ENCODE measurements at regions of chr1 and their contacts with region 1.

Region 1: GRCh38 chr1:207963427-207964194 is 52.7 kb upstream of the CD34 start:
- DNase-seq: peak; percentile 97
- H3K4me3 ChIP-seq: peak overlapping the region; percentile 59 to 71 (median 68)
- H3K27ac ChIP-seq: peak overlapping the region; percentile 90 to 93 (median 92)
- H3K4me1 ChIP-seq: peaks cover 44 to 59% (median 51%) of the 10 kb centered on the region in 4 donors
- H3K27me3 ChIP-seq: no peaks in the 10 kb centered on the region
- CTCF ChIP-seq: peak in 2 of 3 experiments; percentile 100
- EP300 ChIP-seq: peak; percentile 19
- POLR2A ChIP-seq: peak; percentile 81

Region 2: DNA sequence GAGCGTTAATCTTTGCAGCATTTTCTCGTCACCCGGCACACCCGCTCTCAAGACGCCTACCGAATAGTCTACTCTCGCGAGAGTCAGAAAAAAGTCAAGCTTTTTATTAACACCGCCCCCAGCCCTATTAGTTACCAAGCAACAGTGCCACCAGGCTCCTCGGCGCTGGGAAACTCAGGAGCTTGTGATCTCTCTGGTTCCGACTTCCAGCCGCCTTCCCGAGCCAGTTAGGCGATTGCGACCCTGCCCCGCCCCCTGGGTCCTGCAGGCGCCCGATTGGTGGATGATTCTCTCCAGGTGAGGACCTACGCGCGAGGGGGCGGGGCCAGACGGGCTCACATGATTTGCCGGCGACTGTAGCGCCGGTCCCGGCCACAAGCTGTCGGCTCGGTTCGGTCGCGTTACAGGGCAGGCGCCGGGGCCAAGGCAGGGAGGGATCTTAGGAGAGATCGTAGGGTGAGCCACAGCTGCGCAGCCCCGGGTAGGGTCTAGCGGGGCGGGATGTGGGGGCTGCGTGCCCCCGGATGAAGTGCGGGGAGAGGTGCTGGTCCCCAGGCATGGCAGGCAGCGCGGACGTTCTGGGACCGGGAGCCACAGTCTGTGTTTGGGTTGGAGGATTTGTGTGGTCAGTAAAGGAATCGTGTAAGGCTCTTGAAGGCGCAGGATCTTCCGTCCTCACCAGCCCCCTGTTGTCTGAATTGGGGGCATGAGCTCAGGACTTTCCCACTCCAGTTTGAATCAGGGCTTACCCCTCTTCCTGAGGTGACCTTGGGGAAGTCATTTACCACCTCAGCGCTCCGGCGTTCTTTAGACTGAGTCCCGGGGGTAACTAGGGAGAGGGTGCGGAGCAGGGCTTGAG is 910.5 kb before region 1 on chr1 and contains the start of gene PFKFB2:
- intact Hi-C with region 1: loop called (anchors 10 kb)
- DNase-seq: peak; percentile 98
- H3K4me3 ChIP-seq: peak within 1 kb of the TSS; percentile 67 to 78 (median 69)
- H3K27ac ChIP-seq: peak within 1 kb of the TSS; percentile 90 to 93 (median 93)
- H3K4me1 ChIP-seq: peaks cover 25 to 41% (median 39%) of the 10 kb centered on the region in 4 donors
- H3K27me3 ChIP-seq: no peaks in the 10 kb centered on the region
- CTCF ChIP-seq: peak in 2 of 3 experiments; percentile 21 to 46
- EP300 ChIP-seq: no peak
- POLR2A ChIP-seq: peak; percentile 78
- total RNA-seq, gene PFKFB2: 3.7 to 5.3 (median 4.1) TPM

Region 3: GRCh38 chr1:207779008-207779407 is 184.6 kb before region 1 on chr1:
- intact Hi-C with region 1: no loop called
- DNase-seq: no peak
- H3K4me3 ChIP-seq: no peak overlapping the region
- H3K27ac ChIP-seq: no peak overlapping the region
- H3K4me1 ChIP-seq: peaks cover 0 to 6% (median 0%) of the 10 kb centered on the region in 4 donors
- H3K27me3 ChIP-seq: no peaks in the 10 kb centered on the region
- CTCF ChIP-seq: no peak
- EP300 ChIP-seq: no peak
- POLR2A ChIP-seq: no peak

Region 4: GRCh38 chr1:207811920-207812720 is 151.5 kb before region 1 on chr1:
- intact Hi-C with region 1: loop called (anchors 5 kb)
- DNase-seq: no peak
- H3K4me3 ChIP-seq: peak overlapping the region; percentile 16 to 89 (median 34)
- H3K27ac ChIP-seq: peak overlapping the region; percentile 97 to 99 (median 98)
- H3K4me1 ChIP-seq: peaks cover 99 to 100% (median 100%) of the 10 kb centered on the region in 4 donors
- H3K27me3 ChIP-seq: no peaks in the 10 kb centered on the region
- CTCF ChIP-seq: peak; percentile 66 to 77 (median 69)
- EP300 ChIP-seq: no peak
- POLR2A ChIP-seq: no peak

Region 5: GRCh38 chr1:207828485-207829158 is 135.0 kb before region 1 on chr1:
- intact Hi-C with region 1: loop called (anchors 5 kb)
- DNase-seq: no peak
- H3K4me3 ChIP-seq: no peak overlapping the region
- H3K27ac ChIP-seq: peak overlapping the region; percentile 97 to 99 (median 98)
- H3K4me1 ChIP-seq: peaks cover 91 to 96% (median 95%) of the 10 kb centered on the region in 4 donors
- H3K27me3 ChIP-seq: peaks cover 0 to 3% (median 0%) of the 10 kb centered on the region in 4 donors
- CTCF ChIP-seq: peak; percentile 88 to 94 (median 88)
- EP300 ChIP-seq: no peak
- POLR2A ChIP-seq: no peak

Region 6: DNA sequence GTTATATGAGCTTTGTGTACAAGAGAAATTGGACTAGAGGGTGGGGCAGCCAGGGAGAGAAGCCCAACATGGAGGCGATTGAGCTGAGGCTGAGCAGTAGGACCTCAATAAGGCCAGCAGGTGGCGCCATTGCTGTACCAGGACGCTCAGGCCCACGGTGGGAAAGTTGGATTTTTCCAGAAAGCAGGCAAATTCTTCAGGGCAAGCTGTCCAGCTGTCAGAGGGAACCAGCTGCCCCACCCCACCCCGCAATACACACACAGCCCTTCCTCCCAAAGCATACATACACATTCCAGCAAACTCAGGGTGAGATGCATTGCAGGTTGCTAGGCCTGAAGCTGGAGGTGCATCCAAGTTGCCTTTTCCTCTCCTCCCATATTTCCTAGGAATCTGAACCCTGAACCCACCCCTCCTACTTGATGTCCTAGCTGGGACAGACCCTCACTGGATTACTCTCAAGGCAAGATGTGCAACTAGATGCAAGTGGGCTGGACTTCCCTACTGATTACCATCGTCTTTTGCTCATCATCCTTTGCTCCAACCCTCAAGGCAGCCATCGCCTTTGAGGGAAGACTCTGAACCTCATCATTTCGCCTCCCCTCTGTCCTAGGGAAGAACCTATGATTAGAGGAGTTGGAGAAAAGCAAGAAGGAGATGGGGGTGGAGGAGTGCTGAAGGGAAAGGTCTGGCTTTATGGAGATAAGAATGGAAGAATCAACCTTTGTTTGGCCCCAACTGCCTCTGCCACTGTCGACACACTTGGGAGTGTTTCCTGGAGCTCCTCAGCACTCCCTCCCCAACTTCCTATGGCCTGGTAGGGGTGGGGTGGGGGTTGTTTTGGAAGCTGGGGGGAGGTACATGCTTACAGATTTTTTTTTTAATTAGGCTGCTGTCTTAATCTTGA is 78.2 kb before region 1 on chr1:
- intact Hi-C with region 1: loop called (anchors 2 kb)
- DNase-seq: peak; percentile 95
- H3K4me3 ChIP-seq: no peak overlapping the region
- H3K27ac ChIP-seq: peak overlapping the region; percentile 68 to 75 (median 73)
- H3K4me1 ChIP-seq: peaks cover 63 to 77% (median 68%) of the 10 kb centered on the region in 4 donors
- H3K27me3 ChIP-seq: no peaks in the 10 kb centered on the region
- CTCF ChIP-seq: peak; percentile 95 to 96 (median 96)
- EP300 ChIP-seq: no peak
- POLR2A ChIP-seq: no peak

Region 7: DNA sequence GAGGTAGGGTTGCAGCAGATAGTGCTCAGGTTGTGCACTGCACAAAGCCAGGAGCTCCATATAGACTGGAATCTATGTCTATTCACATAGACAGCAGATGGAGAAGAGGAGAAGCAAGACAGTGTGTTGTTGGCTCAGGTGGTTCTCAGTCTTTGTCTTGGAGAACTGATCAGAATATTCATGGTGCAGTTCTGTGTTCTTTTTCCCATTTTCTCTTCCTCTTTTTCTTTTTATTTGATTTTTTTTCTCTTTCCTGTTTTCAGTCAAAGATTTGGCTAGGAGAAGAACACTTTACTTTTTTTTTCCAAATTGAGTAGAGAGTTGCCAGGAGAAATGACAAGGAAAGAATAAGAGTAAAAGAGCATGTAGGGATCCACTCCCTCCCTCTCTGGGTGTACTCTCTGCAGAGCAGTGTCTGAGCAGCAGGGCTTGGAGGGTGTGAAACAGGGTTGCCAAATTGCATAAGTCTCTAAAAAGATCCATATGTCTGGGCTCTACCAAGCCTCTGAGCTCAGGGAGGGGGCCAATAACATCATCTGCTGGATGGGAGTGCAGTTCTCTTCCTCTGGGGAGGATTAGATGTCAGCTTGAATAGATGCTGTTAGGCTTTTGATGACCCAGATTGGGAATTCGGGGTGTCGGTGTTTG is 44.0 kb before region 1 on chr1:
- intact Hi-C with region 1: loop called (anchors 5 kb)
- DNase-seq: peak; percentile 91
- H3K4me3 ChIP-seq: no peak overlapping the region
- H3K27ac ChIP-seq: peak overlapping the region; percentile 32 to 64 (median 58)
- H3K4me1 ChIP-seq: peaks cover 52 to 67% (median 58%) of the 10 kb centered on the region in 4 donors
- H3K27me3 ChIP-seq: no peaks in the 10 kb centered on the region
- CTCF ChIP-seq: no peak
- EP300 ChIP-seq: no peak
- POLR2A ChIP-seq: no peak